ENCODE measurements at regions of chr19 and their contacts with region 1.

Region 1: GRCh38 chr19:7376151-7376852 is 27.6 kb downstream of the ARHGEF18 start:
- DNase-seq: no peak
- ATAC-seq: peak; percentile 14; the same call in 1 of the 3 replicates
- H3K4me3 ChIP-seq: no peak overlapping the region; a peak in 1 of 6 replicates
- H3K27ac ChIP-seq: no peak overlapping the region
- H3K4me1 ChIP-seq: peaks cover 12% of the 10 kb centered on the region
- H3K27me3 ChIP-seq: peaks cover 3 to 13% of the 10 kb centered on the region in 2 experiments; a peak in 2 of 5 replicates
- CTCF ChIP-seq: no peak
- EP300 ChIP-seq: no peak
- POLR2A ChIP-seq: no peak
- RAD21 ChIP-seq: no peak

Region 2: DNA sequence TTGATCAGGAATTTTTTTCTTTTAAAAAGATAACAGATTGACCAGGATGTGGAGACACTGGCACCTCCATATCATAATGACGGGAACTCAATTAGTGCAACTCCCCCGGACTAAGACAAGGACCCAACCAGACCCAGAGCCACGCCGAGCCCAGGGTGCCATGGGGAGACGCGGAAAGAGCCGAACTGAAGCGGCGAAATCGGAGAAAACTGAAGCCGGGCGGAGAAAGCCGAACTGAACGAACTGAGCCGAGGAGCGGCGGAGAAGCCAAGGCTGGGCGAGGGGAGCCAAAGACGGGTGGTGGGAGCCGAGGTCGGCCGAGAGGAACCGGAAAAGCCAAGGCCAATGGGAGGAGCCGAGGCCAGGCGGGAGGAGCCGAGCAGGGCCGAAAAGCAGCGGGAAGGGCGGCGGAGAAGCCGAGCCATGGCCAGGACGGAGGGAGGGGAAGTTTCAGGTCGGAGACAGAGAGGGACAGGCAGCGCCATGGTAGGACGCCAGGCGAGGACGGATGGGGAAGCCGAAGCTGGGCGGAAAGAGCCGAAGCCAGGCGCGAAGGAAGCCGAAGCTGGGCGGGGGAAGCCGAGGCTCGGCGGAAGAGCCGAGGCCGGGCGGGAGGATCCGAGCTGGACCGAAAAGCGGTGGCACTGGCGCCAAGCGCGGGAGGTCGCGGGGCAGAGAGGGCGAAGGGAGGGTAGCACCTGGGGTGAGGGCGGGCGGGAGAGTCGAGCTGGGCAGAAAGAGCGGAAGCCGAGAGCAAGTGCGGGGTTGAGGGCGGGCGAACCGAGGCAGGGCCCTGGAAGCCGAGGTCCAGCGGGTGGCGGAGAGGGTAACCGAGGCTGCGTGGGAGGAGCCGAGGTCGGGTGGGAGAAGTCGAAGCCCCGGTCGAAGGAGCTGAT is 277.4 kb before region 1 on chr19:
- CTCF ChIA-PET with region 1: interaction called, 11 read pairs
- POLR2A ChIA-PET with region 1: interaction called, 3 read pairs
- in situ Hi-C with region 1: no loop called
- intact Hi-C with region 1: loop called (anchors 1 kb)
- DNase-seq: peak; percentile 80
- ATAC-seq: peak; percentile 95
- H3K4me3 ChIP-seq: peak overlapping the region; percentile 66 to 83 (median 77)
- H3K27ac ChIP-seq: peak overlapping the region; percentile 82
- H3K4me1 ChIP-seq: peaks cover 37% of the 10 kb centered on the region
- H3K27me3 ChIP-seq: no peaks in the 10 kb centered on the region
- CTCF ChIP-seq: peak; percentile 27; the same call in 1 of the 2 replicates
- EP300 ChIP-seq: no peak
- POLR2A ChIP-seq: peak; percentile 65 to 71
- RAD21 ChIP-seq: no peak

Region 3: DNA sequence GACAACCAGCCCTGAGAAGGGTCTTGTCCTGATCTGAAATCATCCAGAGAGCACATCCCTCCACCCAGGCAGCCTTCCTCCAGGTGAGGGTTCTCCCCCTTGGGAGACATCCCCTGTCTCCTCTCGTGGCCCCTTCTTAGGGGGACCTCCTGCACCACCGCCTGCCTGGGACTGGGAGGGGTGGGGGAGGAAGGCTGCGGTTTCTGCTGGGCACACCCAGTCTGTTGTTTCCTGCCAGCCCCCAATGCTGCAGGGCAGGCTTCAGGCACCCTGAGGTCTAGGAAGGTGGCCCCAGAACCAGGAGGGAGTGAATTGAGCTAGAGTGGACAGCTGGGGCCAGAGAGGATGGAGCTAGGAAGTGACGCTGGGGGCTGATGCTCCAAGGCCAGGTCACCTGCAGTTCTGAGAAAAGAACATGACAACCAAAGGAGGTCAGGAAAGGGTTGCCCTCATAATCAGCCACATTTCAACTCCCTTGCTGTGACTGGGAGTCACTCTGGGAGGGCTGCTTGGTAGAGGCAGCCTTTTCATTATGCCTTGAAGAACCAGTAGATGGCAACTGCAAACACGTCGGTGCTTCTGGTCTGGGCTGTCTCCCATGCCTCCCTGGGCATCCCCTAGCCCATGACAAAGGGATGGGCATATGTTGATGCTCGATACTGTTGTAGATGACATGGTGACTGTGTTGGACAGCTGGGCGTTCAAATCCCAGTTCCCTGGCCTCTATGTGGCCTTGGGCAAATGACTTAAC is 26.2 kb before region 1 on chr19:
- CTCF ChIA-PET with region 1: interaction called, 16 read pairs
- POLR2A ChIA-PET with region 1: no interaction called
- in situ Hi-C with region 1: no loop called
- intact Hi-C with region 1: loop called (anchors 1 kb)
- DNase-seq: no peak
- ATAC-seq: no peak
- H3K4me3 ChIP-seq: no peak overlapping the region
- H3K27ac ChIP-seq: no peak overlapping the region
- H3K4me1 ChIP-seq: peaks cover 17% of the 10 kb centered on the region
- H3K27me3 ChIP-seq: no peaks in the 10 kb centered on the region; a peak in 1 of 5 replicates
- CTCF ChIP-seq: no peak
- EP300 ChIP-seq: no peak
- POLR2A ChIP-seq: no peak
- RAD21 ChIP-seq: no peak

Region 4: DNA sequence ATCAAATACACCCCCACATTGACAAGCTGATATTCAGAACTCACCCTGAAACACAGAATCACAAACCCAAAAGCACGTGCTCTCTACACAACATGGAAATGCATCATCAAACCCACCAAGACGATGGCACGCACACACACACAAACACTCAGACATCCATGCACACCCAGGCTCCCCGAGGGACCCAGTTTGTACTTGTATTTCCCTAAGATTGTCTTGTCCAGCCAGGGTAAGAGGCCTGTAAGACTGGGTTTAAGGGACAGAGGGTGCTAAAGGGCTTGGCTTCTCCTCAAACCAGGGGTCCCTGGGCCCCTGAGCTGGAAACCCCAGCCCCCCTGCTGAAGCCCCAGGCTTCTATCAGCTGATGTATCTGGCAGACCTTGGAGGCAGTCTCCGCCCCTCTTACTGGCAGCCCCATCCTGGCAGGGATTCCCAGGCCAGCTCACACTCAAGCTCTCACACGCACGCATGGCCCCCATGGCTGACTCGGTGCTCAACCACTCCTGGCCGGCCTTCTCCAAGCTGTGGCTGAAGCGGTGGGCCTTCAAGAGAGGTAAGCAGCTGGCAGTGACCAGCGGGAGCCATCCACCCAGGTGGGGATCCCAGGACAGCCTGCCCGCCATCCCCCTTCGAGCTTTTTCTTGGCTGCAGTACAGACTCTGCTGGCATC is 21.0 kb before region 1 on chr19:
- CTCF ChIA-PET with region 1: interaction called, 16 read pairs
- POLR2A ChIA-PET with region 1: no interaction called
- in situ Hi-C with region 1: no loop called
- intact Hi-C with region 1: loop called (anchors 1 kb)
- DNase-seq: no peak
- ATAC-seq: no peak; the same call in 2 of the 3 replicates
- H3K4me3 ChIP-seq: no peak overlapping the region
- H3K27ac ChIP-seq: no peak overlapping the region
- H3K4me1 ChIP-seq: no peaks in the 10 kb centered on the region
- H3K27me3 ChIP-seq: no peaks in the 10 kb centered on the region
- CTCF ChIP-seq: no peak
- EP300 ChIP-seq: no peak
- POLR2A ChIP-seq: no peak
- RAD21 ChIP-seq: no peak